ENCODE measurements at regions of chr12 and their contacts with region 1.

Region 1: DNA sequence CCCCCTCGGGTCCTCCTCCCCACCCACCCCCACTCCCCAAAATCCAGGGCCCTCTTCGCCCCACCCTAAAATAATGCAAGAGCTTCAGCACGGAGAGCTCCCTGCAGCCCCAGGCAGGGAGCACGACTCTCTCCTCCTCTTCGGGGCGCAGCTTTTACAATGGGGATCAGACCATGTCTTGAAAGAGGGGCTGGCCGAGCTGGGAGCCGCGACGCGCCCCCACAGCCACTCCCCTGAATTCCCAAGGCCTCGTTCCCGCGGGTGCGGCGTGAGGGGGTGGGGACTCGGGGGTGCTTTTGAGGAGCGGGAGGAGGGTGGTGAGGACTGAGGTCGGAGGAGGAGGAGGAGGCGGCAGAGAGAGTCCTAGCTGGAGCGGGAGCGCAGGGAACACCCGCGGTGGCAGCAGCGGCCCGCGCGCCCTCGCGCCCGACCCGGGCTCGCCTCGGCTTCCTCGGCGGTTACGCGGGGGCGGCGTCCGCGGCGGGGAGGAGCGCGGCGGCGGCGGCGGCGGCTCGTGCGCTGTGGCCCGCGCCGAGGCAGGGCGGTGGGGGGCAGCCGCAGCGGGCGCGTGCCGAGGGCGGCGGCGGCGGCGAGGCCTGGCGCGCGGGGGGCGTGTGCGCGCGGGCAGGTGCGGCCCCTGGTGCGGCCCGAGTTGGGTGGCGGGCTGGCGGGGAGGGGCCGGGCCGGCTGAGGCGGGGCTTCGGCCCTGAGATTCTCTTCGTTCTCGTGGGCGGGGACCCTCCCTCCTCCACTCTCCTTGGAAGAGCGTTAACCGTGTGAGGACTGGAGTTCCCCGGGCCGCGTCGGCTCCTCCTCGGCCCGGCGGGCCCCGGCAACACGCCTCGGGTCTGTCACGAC is at the start of gene ANKS1B:
- DNase-seq: peak; percentile 86 to 88
- H3K4me3 ChIP-seq: peak within 1 kb of the TSS; percentile 54 to 80 (median 59)
- H3K27ac ChIP-seq: peak within 1 kb of the TSS; percentile 82 to 87 (median 85)
- H3K4me1 ChIP-seq: peaks cover 3 to 6% of the 10 kb centered on the region in 2 donors
- H3K27me3 ChIP-seq: no peaks in the 10 kb centered on the region
- CTCF ChIP-seq: no peak
- POLR2A ChIP-seq: peak in 1 of 2 donors; percentile 59
- total RNA-seq, gene ANKS1B: 34.5 to 81.9 (median 71.1) TPM

Region 2: GRCh38 chr12:99809909-99810308 is 174.6 kb before region 1 on chr12:
- intact Hi-C with region 1: loop called (anchors 10 kb)
- DNase-seq: no peak
- H3K4me3 ChIP-seq: no peak overlapping the region
- H3K27ac ChIP-seq: no peak overlapping the region
- H3K4me1 ChIP-seq: no peaks in the 10 kb centered on the region
- H3K27me3 ChIP-seq: no peaks in the 10 kb centered on the region
- CTCF ChIP-seq: no peak
- POLR2A ChIP-seq: no peak

Measured in thyroid gland (tissue), 4 donors.